ENCODE measurements at regions of chr12 and their contacts with region 1.

Region 1: GRCh38 chr12:54005853-54006686 is 2.7 kb upstream of the HOXC8 start:
- DNase-seq: peak; percentile 59
- H3K4me3 ChIP-seq: no peak overlapping the region
- H3K27ac ChIP-seq: no peak overlapping the region
- H3K4me1 ChIP-seq: peaks cover 10% of the 10 kb centered on the region
- H3K27me3 ChIP-seq: no peaks in the 10 kb centered on the region
- CTCF ChIP-seq: peak; percentile 84 to 86

Region 2: DNA sequence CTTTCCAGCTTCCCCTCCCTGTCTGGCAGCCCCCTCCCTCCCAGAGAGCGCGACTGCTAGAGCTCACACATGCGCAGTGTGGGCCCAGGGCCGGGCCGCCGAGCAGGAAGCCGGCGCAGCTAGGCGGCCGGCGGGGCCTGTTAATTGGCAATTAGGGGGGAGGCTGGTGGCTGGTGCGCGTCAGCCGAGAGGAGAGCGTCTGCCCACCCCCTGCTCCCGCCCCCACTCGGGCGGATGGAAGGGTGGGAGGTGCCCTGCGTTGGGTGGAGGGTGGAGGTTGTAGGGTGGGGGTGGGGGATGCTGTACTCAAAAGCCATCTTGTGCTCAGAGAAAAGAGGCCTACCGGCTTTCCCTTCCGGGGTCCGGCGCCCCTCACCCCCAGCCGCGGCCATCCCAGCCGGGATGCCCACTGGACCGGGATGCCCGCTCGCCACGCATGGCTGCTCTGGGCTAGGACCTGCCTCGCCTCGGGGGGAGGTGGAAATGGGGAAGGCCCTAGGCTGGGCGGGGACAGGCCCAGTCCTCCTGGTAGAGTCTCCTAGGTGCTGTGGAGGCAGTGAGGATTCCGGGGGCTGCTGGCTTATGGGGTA is 11.9 kb after region 1 on chr12:
- CTCF ChIA-PET with region 1: interaction called, 27 read pairs
- dilution Hi-C with region 1: no loop called
- in situ Hi-C with region 1: no loop called
- intact Hi-C with region 1: loop called (anchors 1 kb)
- DNase-seq: peak; percentile 93
- H3K4me3 ChIP-seq: peak overlapping the region; percentile 63 to 87 (median 69)
- H3K27ac ChIP-seq: peak overlapping the region; percentile 90
- H3K4me1 ChIP-seq: peaks cover 49% of the 10 kb centered on the region
- H3K27me3 ChIP-seq: no peaks in the 10 kb centered on the region
- CTCF ChIP-seq: no peak

Region 3: GRCh38 chr12:54134850-54135249 is 128.8 kb after region 1 on chr12:
- CTCF ChIA-PET with region 1: no interaction called
- dilution Hi-C with region 1: no loop called
- in situ Hi-C with region 1: no loop called
- intact Hi-C with region 1: loop called (anchors 1 kb)
- DNase-seq: no peak
- H3K4me3 ChIP-seq: no peak overlapping the region
- H3K27ac ChIP-seq: no peak overlapping the region
- H3K4me1 ChIP-seq: no peaks in the 10 kb centered on the region
- H3K27me3 ChIP-seq: no peaks in the 10 kb centered on the region
- CTCF ChIP-seq: peak in 1 of 2 donors; percentile 19

Region 4: GRCh38 chr12:54191550-54192022 is 185.5 kb after region 1 on chr12:
- CTCF ChIA-PET with region 1: interaction called, 16 read pairs
- dilution Hi-C with region 1: no loop called
- in situ Hi-C with region 1: loop called in 1 of 2 experiments (anchors 5 kb)
- intact Hi-C with region 1: loop called (anchors 1 kb)
- DNase-seq: peak; percentile 61
- H3K4me3 ChIP-seq: no peak overlapping the region
- H3K27ac ChIP-seq: no peak overlapping the region
- H3K4me1 ChIP-seq: peaks cover 12% of the 10 kb centered on the region
- H3K27me3 ChIP-seq: no peaks in the 10 kb centered on the region
- CTCF ChIP-seq: peak; percentile 84 to 90

Region 5: DNA sequence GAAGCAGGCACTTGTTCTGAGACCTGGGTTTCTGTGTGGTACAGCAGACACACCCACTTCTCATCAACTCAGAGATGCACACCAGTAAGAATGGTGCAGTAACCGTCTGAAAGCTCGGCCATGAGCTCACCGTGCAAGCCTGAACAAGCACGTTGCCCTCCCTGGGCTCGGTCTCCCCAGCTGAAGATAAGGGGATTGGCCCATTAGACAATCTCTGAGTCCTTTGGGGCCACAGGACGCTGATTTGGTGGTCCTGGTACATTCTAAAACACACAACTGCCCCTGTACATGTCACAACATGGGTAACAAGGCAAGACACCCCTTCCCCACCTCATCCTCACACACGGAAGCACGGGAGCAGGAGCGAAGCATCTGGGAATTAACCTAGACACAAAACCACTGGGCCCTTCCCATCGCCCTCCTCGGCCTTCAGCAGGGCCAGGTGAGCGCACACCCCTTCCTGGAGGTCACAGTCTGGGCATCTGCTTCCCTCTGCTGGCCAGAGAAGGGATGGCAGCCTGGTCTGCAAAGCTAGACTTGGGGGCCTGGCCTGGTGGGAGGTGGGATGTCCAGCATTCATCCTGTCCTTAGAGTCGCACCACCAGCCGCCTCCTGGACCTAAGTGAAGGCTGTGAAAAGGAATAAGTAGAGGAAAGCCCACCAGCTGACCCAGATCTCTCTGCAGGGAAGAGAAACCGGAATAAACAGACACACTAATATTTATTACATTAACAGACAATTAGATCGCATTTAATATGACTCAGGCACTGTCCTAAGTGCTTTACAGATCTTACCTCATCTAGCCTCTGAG is 201.6 kb after region 1 on chr12:
- CTCF ChIA-PET with region 1: interaction called, 19 read pairs
- dilution Hi-C with region 1: loop called (anchors 10 kb)
- in situ Hi-C with region 1: no loop called
- intact Hi-C with region 1: loop called (anchors 1 kb)
- DNase-seq: peak; percentile 81
- H3K4me3 ChIP-seq: no peak overlapping the region
- H3K27ac ChIP-seq: no peak overlapping the region
- H3K4me1 ChIP-seq: peaks cover 13% of the 10 kb centered on the region
- H3K27me3 ChIP-seq: no peaks in the 10 kb centered on the region
- CTCF ChIP-seq: peak; percentile 97 to 99

Region 6: DNA sequence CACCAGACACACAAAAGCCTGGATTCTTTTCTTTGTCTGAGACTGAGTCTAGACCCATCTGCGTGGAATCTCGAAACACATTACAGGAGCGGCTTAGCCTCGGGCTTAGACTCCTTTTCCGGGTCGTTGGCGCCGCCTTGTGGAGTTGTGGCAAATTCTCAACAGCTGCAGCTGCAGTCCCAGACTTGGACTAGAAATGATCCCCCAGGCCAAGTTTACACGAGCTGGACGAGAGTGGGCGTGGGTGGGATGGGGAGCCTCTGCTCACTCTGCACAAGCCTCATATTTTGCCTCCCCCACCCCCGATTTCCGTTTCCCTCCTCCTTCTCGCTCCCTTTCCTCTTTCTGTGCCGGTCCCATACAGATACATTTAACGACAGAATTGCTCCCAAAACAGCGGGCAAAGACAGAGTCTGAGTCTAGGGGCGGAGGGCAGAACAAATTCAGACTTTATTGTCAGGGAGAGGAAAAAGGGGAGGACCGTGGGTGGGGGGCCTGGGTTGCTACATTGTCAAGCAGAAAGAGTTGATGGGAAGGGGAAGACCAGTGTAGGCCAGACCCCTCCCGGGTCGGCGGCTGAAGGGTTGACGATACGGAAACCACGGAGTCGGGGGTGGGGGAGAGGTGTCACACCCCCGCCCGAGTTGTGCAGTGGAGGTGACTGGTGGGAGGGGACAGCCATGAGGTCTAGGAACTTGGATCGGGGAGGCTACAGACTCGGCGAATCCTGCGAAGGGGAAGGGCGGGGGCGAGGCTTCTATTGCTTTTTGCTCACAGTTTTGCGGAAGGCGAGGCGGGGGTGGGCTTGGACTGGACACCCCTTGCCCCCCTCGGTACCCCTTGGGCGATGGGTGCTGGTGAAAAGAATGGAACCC is 362.9 kb after region 1 on chr12:
- CTCF ChIA-PET with region 1: no interaction called
- dilution Hi-C with region 1: loop called (anchors 25 kb)
- in situ Hi-C with region 1: loop called (anchors 25 kb)
- intact Hi-C with region 1: loop called (anchors 10 kb)
- DNase-seq: peak; percentile 65
- H3K4me3 ChIP-seq: no peak overlapping the region
- H3K27ac ChIP-seq: no peak overlapping the region
- H3K4me1 ChIP-seq: peaks cover 32% of the 10 kb centered on the region
- H3K27me3 ChIP-seq: no peaks in the 10 kb centered on the region
- CTCF ChIP-seq: peak; percentile 87 to 89

Region 7: DNA sequence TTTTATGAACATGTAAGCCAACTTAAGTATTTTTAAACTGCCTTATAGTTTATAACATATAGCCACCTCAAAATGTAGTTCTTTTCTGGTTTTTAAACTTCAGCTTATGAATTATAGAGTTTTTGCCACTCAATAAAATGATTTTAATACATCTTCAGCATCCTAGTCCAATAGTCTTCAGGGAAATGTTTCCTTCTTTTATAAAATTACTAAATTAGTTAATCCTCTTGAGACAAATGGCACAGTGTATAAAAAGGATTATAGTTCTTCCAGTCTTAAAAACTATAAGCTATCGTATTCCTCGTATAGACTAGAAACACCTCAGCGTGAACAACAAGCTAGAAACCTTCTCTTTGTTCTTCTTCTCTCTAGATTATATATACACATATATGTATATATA is 1238.2 kb after region 1 on chr12 and contains the start of gene OR6C74:
- CTCF ChIA-PET with region 1: no interaction called
- dilution Hi-C with region 1: no loop called
- in situ Hi-C with region 1: no loop called
- intact Hi-C with region 1: no loop called
- DNase-seq: no peak
- H3K4me3 ChIP-seq: no peak within 1 kb of the TSS
- H3K27ac ChIP-seq: no peak within 1 kb of the TSS
- H3K4me1 ChIP-seq: no peaks in the 10 kb centered on the region
- H3K27me3 ChIP-seq: peaks cover 3% of the 10 kb centered on the region
- CTCF ChIP-seq: no peak
- total RNA-seq, gene OR6C74: not detected

Measured in mammary epithelial cell (primary cell).